SK-MEL-5 (cell line): ENCODE measurements at regions of chr18 and their contacts with region 1.

Region 1: GRCh38 chr18:73717573-73717972 is 430.1 kb downstream of the FBXO15 start:
- DNase-seq: no peak

Region 2: DNA sequence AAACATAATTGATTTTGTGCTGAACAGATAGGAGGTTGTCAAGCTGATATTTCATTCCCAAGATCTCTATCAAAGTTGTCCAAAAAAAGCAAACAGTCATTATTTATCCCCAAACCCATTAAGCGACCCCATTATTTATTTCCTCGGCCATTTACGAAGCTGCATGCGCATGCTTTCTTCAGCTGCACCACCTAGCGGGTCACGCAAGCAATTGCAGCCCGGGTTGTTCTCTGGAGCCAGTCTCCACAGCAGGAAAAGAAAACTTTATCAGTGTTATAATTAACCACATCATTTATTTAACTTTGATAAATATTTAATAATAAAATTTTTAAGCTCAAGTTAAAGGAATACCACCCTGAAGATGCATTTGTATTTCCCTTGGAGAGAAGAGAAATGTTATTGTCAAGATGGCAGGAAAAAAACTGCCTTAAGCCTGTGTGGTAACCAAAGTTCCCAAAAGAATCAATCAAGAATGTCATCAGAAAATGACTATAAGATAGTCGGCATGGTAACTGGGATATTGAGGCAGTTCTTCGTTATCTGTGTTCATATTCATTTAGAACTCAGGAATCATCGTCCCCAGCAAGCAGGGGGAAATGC is 125.3 kb after region 1 on chr18:
- in situ Hi-C with region 1: loop called (anchors 10 kb)
- DNase-seq: peak; percentile 55